ENCODE measurements at regions of chr1 and their contacts with region 1.

Region 1: DNA sequence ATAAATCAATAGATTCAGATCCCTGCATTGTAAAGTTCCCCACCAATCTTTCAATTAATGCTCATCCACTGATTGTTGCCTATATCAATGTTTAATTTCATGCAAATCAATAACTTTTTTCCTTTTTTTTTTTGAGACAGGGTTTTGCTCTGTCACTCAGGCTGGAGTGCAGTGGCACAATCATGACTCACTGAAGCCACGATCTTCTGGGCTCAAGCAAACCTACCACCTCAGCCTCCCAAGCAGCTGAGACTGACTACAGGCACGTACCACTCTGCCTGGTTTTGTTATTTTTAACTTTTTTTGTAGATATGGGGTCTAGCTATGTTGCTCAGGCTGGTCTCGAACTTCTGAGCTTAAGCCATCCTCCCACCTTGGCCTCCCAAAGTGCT is 25.7 kb downstream of the DIO1 start:
- DNase-seq: no peak
- H3K4me3 ChIP-seq: no peak overlapping the region
- H3K27ac ChIP-seq: no peak overlapping the region
- H3K4me1 ChIP-seq: peaks cover 0 to 9% of the 10 kb centered on the region in 2 donors
- H3K27me3 ChIP-seq: no peaks in the 10 kb centered on the region
- CTCF ChIP-seq: no peak
- POLR2A ChIP-seq: no peak

Region 2: GRCh38 chr1:52365746-52366516 is 1553.7 kb before region 1 on chr1 and contains the start of gene CC2D1B:
- intact Hi-C with region 1: loop called (anchors 10 kb)
- DNase-seq: peak; percentile 99
- H3K4me3 ChIP-seq: peak within 1 kb of the TSS; percentile 72 to 95 (median 87)
- H3K27ac ChIP-seq: peak within 1 kb of the TSS; percentile 91 to 97
- H3K4me1 ChIP-seq: peaks cover 7% of the 10 kb centered on the region in 2 donors
- H3K27me3 ChIP-seq: no peaks in the 10 kb centered on the region
- CTCF ChIP-seq: peak; percentile 11 to 55 (median 28)
- POLR2A ChIP-seq: peak; percentile 62
- total RNA-seq, gene CC2D1B: 25.2 to 33.1 (median 33.1) TPM

Region 3: GRCh38 chr1:54980528-54981241 is 1061.0 kb after region 1 on chr1 and contains the start of gene TMEM61:
- intact Hi-C with region 1: no loop called
- DNase-seq: no peak
- H3K4me3 ChIP-seq: peak within 1 kb of the TSS; percentile 33 to 68 (median 67)
- H3K27ac ChIP-seq: peak within 1 kb of the TSS; percentile 65 to 73
- H3K4me1 ChIP-seq: peaks cover 0 to 3% of the 10 kb centered on the region in 2 donors
- H3K27me3 ChIP-seq: peaks cover 0 to 12% of the 10 kb centered on the region in 2 donors
- CTCF ChIP-seq: no peak
- POLR2A ChIP-seq: no peak
- total RNA-seq, gene TMEM61: 0.32 to 8.3 (median 7.5) TPM

Measured in breast epithelium (tissue), 4 donors.